Activated CD4-positive, alpha-beta T cell treated with anti-CD3 and anti-CD28 coated beads, Interleukin-2, amount 10 ng/mL, durations not matched to agents 24 days and 14 days (primary cell): ENCODE measurements at regions of chr1 and their contacts with region 1.

Region 1: DNA sequence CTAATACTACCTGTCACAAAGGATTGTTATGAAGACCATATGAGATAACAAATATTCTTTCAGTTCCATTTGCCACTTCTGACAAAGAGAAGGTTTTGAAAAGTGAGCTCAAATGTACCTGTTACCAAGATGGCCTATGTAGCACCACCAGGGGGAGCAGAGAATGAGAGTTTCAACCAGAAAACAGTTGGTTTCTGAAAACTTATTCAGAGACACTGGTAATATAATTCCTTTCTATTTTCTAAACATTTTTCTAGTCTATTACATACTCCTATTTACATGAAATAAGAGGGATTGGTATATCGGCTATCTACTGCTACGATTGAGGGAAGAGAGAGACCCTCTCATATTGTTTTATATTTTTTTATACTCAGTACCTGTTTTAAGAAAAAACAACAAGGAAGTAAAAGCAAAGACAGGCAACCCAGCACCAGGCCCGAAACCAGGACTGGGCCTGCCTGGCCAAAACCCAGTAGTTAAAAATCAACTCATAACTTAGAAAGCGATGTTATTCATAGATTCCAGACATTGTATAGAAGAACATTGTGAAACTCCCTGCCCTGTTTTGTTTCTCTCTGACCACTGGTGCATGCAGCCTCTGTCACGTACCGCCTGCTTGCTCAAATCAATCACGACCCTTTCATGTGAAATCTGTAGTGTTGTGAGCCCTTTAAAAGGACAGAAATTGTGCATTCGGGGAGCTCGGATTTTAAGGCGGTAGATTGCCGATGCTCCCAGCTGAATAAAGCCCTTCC is 48.3 kb downstream of the IL23R start:
- DNase-seq: peak; percentile 88
- H3K4me3 Mint-ChIP-seq: no peak overlapping the region
- H3K27ac Mint-ChIP-seq: peak overlapping the region; percentile 62
- H3K4me1 Mint-ChIP-seq: peaks cover 41% of the 10 kb centered on the region
- H3K27me3 Mint-ChIP-seq: no peaks in the 10 kb centered on the region

Region 2: GRCh38 chr1:66764994-66765578 is 449.5 kb before region 1 on chr1:
- intact Hi-C with region 1: loop called (anchors 5 kb)
- DNase-seq: peak; percentile 86
- H3K4me3 Mint-ChIP-seq: no peak overlapping the region
- H3K27ac Mint-ChIP-seq: no peak overlapping the region
- H3K4me1 Mint-ChIP-seq: peaks cover 16% of the 10 kb centered on the region
- H3K27me3 Mint-ChIP-seq: no peaks in the 10 kb centered on the region

Region 3: DNA sequence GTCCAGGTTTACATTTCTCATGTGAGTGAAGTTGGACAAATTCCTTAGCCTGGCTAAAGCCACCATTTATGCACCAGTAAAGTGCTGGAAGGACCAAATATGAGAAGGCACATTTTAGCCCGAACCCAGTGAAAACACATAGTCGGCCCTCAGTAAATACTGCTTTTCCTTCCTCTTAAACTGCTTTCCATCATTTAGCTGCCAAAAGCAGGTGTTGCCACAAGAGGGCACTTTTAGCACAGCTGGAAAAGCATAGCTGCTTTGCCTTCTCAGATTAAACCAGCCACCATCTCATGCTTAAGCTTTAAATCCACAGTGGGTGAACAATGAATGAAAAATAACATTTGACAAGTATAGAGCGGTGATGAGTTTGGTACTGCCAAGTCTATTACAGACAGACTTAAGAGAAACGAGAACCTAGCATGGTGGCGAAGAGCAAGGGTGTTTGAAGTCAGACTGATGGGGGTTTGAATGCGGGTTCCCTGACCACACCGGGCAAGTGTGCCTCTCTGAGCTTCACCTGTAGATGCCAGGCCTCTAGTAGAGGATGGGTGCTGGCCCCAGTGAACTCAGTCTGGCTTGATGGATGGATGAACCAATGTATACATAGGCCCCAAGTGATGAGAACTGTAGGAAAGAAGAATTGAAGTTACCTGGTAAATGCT is 218.4 kb before region 1 on chr1:
- intact Hi-C with region 1: loop called (anchors 1 kb)
- DNase-seq: peak; percentile 90
- H3K4me3 Mint-ChIP-seq: no peak overlapping the region
- H3K27ac Mint-ChIP-seq: no peak overlapping the region
- H3K4me1 Mint-ChIP-seq: peaks cover 11% of the 10 kb centered on the region
- H3K27me3 Mint-ChIP-seq: no peaks in the 10 kb centered on the region

Region 4: DNA sequence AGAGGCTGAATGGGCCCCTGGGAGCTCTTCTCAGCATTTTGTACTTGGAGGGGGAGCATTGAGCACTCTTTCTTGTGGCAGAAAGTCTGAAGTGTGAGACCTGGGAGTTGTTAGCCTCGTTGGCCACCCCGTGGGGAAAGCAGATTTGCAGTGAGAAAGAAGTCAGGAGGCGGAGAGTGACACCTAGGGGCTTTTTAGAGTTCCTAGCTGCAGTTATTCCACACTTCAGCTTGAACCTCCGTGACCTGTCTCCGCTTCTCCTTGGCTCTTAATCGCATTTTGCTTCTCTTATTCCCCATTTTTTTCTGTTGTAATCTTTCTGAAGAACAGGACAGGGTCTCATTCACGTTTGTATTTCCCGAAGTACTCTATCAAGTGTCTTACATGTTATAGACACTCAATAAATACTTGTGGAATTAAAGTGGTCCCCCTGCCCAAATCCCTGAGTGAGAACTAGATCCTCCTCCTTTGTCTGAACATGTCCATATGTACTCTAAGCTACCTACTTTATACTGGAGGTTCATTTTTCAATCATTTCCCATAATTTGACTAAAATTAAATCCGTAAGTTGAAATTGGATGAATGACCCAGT is 65.3 kb before region 1 on chr1:
- intact Hi-C with region 1: loop called (anchors 2 kb)
- DNase-seq: peak; percentile 86
- H3K4me3 Mint-ChIP-seq: no peak overlapping the region
- H3K27ac Mint-ChIP-seq: peak overlapping the region; percentile 55
- H3K4me1 Mint-ChIP-seq: peaks cover 32% of the 10 kb centered on the region
- H3K27me3 Mint-ChIP-seq: peaks cover 4% of the 10 kb centered on the region

Region 5: DNA sequence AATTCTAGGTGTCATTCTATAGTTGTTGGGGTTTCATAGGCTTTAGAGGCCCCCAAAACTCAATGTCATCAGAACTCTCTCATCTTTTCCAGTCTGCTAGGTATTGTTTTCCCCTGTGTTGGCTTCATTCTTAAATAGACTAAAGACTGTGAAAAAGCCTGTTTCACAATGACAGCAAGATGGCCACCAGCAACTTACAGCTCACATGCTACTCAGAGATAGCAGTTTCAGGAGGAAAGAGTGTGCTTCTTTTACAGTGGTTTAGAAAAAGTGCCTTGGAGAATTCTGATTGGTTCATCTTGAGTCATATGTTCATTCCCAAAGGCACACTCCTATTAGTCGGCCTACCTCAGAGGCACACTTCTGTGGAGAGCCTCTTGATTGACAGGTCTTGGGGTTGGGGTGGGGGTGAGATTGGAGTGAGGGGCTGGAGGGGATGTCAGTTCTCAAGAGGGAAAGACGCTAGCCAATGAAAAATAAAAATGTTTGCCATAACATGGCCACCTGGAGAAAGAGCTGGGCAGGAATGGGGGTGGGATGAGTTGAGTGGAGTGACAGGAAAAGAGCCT is 39.8 kb before region 1 on chr1:
- intact Hi-C with region 1: loop called (anchors 1 kb)
- DNase-seq: no peak
- H3K4me3 Mint-ChIP-seq: peak overlapping the region; percentile 42
- H3K27ac Mint-ChIP-seq: peak overlapping the region; percentile 95
- H3K4me1 Mint-ChIP-seq: peaks cover 48% of the 10 kb centered on the region
- H3K27me3 Mint-ChIP-seq: no peaks in the 10 kb centered on the region

Region 6: DNA sequence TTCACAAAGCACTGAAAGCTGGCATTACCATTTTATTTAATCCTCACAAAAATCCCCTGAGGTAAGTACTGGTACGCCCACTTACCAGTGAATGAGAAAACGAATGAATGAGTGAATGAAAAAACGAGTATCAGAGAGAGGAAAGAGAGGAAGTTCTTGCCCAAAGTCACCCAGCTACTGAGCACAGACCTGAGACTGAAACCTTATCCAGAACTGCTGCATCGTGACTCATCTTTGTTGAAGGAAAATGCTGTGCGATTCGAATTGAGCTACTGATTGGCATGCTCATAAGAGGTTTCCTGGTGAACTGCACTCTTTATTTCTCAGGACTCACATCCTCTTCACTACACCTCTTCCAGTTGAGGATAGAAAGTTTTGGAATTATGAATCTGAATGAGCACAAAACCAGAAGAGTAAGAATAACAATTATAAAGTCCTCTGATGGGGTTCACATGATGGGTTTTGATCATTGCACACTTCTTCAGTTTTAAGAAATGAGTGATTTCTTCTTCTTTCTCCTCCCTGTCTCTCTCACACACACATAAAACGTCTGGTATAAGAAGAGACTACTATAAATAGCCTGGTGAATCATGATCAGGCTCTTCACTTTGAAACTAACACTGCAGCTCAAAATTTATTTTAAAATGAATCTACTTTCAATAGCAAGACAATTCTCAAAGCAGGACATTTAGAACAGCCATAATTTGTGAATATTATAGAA is 125.2 kb after region 1 on chr1:
- intact Hi-C with region 1: loop called (anchors 2 kb)
- DNase-seq: peak; percentile 85
- H3K4me3 Mint-ChIP-seq: peak overlapping the region; percentile 68
- H3K27ac Mint-ChIP-seq: peak overlapping the region; percentile 94
- H3K4me1 Mint-ChIP-seq: peaks cover 77% of the 10 kb centered on the region
- H3K27me3 Mint-ChIP-seq: no peaks in the 10 kb centered on the region

Region 7: DNA sequence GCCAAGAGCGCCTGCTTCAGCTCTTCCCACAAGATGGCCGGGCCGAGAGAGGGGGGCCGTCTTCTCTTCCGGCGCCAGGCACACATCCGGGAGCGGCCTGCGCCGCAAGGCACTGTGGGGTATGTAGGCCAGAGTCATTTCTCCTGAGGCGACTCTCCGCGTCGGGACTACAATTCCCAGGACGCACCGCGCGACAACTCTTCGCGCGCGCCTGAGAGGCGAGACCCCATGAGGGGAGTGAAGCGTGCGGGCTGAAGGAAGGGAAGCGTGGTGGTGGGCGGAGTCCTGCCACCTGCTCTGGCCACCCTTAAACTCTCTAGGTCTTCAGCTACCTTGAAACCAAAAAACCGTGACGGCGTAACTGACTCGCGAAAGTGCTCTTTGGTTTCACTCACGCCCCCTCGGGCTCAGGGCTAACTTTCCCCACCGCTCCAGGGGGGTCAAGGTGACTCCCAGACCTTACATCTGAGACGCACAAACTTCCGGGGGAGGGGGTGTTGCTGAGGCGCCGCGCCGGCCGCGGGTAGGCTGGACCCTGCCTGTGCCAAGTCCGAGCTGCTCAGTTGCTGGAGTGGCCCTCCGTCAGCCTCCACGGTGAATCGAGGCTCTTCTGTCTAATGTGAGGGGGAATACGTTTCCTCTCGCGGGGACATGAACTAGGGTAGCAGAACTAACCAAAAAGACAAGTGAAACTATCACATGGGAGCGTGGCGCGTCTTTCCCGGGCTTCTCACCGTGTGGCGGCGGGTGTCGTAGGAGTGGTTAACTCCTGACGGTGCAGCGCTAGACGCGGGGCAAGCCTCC is 216.0 kb after region 1 on chr1 and contains the start of gene SERBP1:
- intact Hi-C with region 1: loop called (anchors 1 kb)
- DNase-seq: peak; percentile 99
- H3K4me3 Mint-ChIP-seq: peak within 1 kb of the TSS; percentile 95
- H3K27ac Mint-ChIP-seq: peak within 1 kb of the TSS; percentile 98
- H3K4me1 Mint-ChIP-seq: peaks cover 47% of the 10 kb centered on the region
- H3K27me3 Mint-ChIP-seq: no peaks in the 10 kb centered on the region
- total RNA-seq, gene SERBP1: 619 and 630 TPM in 2 replicates